Left cardiac atrium (tissue), 4 donors: ENCODE measurements at regions of chr18 and their contacts with region 1.

Region 1: DNA sequence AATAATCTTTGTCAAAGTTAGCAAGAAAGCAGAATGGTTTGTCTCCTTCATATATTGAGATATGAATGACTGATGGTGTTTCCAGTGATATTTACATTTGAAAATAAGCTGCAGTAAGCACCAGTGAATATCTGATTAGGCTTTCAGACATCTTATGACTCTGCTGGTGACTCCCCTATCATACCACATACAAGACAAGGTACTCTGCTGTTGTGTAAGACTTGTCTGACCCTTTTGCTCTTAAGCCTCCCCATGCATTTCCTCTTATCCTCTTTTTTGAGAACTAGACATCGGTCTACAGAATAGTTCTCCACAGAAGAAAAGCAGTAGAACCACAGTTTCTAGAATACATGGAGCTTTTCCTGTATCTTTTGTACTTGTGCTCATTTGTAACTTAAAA is 9.3 kb downstream of the POLI start:
- DNase-seq: no peak
- ATAC-seq: no peak

Region 2: GRCh38 chr18:54181856-54182602 is 96.6 kb before region 1 on chr18:
- intact Hi-C with region 1: loop called in 1 of 2 experiments (anchors 5 kb)
- DNase-seq: no peak
- ATAC-seq: no peak